Head of caudate nucleus (tissue), 42 donors: ENCODE measurements at regions of chr4 and their contacts with region 1.

Region 1: DNA sequence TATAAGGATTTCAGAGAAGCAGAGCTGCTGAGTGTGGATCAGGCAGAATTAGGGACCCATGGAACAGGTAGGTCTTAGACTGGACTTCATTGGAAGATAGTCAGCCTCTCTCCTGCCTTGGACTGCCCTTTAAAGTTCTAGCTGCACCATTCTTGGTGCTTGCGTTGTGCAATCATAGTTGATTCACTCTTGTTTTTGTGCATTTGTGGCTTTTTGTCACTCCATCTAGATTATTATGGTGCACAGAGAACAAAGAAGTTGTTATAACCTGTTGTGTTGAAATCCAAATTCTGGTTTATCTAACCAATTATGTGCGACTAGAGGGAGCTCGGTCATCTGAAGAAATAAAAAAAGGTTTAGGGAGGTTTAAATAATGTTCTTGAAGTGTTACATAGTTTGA is 59.3 kb downstream of the JADE1 start:
- DNase-seq: no peak

Region 2: GRCh38 chr4:128454281-128455075 is 414.3 kb before region 1 on chr4:
- intact Hi-C with region 1: loop called (anchors 5 kb)
- DNase-seq: peak; percentile 59 to 93 (median 81)

Region 3: DNA sequence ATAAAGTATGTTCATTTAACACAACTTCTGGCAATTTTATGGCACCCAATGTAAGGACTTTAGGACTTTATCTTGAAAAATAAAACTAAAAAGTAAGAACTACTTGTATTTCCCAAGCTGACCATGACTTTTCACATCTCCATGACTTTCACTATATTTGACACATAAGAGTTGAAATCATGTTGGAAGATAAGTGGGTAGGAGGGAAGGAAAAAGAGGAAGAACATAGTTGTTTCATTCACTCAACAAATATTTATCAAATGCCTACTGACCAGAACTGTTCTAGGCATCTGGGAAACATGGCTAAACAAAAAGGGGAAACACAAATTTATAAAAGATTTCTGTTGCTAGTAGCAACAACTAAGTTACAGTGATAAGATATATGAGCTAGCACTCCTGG is 208.6 kb after region 1 on chr4:
- intact Hi-C with region 1: no loop called
- DNase-seq: no peak